GM18951 (cell line): ENCODE measurements at regions of chr7 and their contacts with region 1.

Region 1: GRCh38 chr7:134605973-134606923 is 40.4 kb upstream of the BPGM start:
- POLR2A ChIP-seq: no peak

Region 2: GRCh38 chr7:134448700-134449229 is 157.5 kb before region 1 on chr7:
- in situ Hi-C with region 1: loop called (anchors 10 kb)
- POLR2A ChIP-seq: no peak

Region 3: DNA sequence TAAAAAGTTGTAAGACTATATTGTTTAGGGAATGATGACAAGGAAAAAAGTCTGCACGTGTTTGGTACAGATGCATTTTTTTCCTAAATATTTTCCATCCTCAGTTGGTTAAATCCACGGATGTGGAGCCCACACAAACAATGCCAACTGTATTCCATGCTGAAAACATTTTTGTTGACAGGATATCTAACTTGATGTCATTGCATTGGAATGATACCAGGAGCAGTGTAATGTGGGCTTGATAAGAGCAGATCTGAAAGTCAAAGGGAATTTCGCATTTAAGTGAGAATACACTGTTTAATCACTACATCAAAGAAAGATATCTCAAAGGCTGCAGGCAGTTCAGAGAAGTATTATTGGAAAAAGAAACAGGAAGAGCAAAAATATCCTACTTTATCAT is 492.1 kb after region 1 on chr7:
- in situ Hi-C with region 1: no loop called
- POLR2A ChIP-seq: no peak